HEK293 (cell line): ENCODE measurements at regions of chr20 and their contacts with region 1.

Region 1: DNA sequence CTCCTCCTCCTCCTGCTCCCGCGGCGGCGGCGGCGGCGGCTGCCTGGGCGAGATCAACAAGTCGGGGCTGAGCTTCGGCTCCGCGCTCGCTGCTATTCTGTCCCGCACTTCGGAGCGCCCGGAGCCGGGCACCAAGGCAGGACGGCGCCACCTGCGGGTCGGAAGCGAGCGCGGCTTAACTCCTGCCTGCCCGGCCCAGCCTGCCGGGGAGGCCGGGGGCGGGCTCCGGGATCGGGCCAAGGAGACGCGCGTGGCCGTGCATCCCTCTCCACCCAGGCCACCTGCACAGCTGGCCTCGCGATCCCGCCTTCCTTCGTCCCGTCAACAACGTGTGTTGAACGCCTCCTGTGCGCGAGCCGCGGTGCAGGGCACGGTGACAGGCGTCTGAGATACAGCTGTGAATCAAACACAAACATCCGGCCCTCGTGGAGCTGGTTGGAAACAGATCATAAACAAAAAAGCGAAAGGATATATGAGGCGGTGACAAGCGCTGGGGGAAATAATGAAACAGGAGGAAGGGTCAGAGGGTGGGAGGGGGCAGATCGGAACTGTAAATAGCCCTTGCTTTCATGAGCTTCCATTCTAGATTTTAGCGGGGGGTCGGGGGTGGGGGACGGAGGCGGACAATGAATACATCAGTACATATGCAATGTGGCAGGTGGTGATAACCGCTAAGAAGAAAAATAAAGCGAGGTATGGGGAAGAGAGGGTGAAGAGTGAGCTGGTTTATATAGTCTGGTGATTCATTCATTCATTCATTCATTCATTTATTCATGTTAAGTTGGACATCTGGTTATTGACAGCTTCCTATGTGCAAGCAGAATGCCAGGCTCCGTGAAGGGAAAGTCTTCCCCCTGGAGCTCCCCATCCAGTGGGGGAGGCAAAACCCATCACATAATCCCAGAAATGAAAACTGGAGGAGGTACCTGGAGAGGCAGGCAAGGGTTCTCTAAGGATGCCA is 2.0 kb upstream of the KCNB1 start:
- H3K4me3 ChIP-seq: peak overlapping the region; percentile 53
- H3K27ac ChIP-seq: no peak overlapping the region
- H3K4me1 ChIP-seq: 0 out of 2 replicates have a peak, but pooled peaks cover 4% of the 10 kb centered on the region
- CTCF ChIP-seq: peak; percentile 95

Region 2: DNA sequence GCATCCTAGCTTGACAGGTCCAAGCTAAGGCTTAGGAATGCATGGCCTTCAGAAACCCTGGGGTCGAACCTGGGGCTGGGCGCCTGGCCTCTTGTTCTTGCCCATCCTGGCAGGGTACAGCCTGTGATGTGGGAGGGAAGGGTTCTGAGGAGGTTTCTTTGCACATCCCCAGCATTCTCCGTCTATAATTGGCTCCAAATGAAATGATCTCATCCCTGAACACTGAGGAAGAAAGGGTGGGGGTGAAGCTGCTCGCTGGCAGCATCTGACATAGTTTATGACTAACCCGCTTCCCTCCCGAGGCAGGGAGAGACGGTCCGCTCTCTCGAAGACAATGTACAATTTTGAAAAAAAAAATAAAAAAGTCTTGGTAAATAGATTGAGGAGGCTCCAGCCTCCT is 139.5 kb before region 1 on chr20:
- CTCF ChIA-PET with region 1: interaction called, 118 read pairs
- POLR2A ChIA-PET with region 1: no interaction called
- H3K4me3 ChIP-seq: peak overlapping the region; percentile 8; the same call in 1 of the 2 replicates
- H3K27ac ChIP-seq: no peak overlapping the region
- H3K4me1 ChIP-seq: no peaks in the 10 kb centered on the region; the same call in 1 of the 2 replicates
- CTCF ChIP-seq: no peak

Region 3: DNA sequence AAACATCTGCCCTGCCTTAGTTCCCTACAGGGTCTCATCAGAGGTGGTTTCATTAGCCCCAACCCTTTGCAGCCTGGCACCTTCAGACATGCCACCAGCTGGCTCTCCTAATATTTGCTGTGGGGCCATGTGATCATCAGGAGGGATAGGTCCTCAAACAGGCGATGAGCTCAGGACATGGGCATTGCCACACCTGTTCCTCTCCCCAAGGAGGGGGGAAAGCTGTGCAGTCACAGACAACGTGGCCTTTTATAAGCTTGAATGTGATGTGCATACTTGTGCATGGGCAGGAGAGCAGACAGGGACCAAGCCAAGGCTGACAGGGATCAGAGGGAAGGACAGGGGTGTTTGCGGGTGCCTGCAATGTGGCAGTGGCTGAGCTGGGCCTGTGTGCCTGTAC is 127.8 kb before region 1 on chr20:
- CTCF ChIA-PET with region 1: interaction called, 13 read pairs
- POLR2A ChIA-PET with region 1: no interaction called
- H3K4me3 ChIP-seq: no peak overlapping the region
- H3K27ac ChIP-seq: no peak overlapping the region
- H3K4me1 ChIP-seq: no peaks in the 10 kb centered on the region
- CTCF ChIP-seq: no peak

Region 4: DNA sequence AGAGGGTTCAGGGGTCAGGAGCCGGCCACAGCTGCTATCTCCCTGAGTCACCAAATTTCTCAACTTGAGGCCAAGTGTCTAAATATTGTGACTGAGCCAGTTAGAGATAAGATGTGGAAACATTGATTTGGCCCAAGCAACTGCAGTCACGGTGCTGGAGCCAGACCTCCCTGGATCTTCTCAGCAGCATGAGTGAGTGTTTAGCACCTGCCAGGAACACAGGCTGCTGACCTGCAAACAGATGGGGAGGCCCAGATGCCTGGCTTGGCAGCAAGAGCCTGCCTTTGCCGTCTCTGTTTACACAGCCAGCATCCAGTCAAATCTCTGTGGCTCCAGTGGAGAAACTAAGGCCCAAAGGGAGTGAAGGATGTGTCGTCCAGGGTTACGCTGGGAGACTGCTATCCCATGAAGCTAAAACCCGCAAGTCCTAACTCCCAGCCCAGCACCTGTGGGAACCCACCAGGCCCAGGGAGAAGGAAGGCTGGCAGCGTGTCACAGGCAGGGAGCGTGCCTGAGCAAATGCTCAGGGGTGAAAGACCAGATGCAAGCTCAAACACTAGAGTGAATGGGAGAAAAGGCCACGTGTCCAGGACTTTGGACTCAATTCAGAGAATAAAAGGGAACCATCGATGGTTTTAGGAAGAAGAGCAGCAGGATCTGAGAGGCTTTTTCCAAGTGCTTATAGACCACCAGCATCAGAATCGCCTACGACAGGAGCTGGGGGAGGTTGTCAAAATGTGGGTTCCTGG is 99.4 kb after region 1 on chr20:
- CTCF ChIA-PET with region 1: no interaction called
- POLR2A ChIA-PET with region 1: no interaction called
- H3K4me3 ChIP-seq: no peak overlapping the region
- H3K27ac ChIP-seq: no peak overlapping the region
- H3K4me1 ChIP-seq: no peaks in the 10 kb centered on the region
- CTCF ChIP-seq: no peak

Region 5: GRCh38 chr20:49914307-49915089 is 430.0 kb after region 1 on chr20:
- CTCF ChIA-PET with region 1: no interaction called
- POLR2A ChIA-PET with region 1: no interaction called
- H3K4me3 ChIP-seq: peak overlapping the region; percentile 99
- H3K27ac ChIP-seq: peak overlapping the region; percentile 99; the same call in 1 of the 2 replicates
- H3K4me1 ChIP-seq: no peaks in the 10 kb centered on the region
- CTCF ChIP-seq: peak; percentile 65